ENCODE measurements at regions of chr4 and their contacts with region 1.

Region 1: GRCh38 chr4:48727666-48728459 is 52.2 kb downstream of the FRYL start:
- DNase-seq: no peak
- H3K4me3 ChIP-seq: no peak overlapping the region
- H3K27ac ChIP-seq: peak overlapping the region; percentile 89
- H3K4me1 ChIP-seq: peaks cover 31% of the 10 kb centered on the region
- H3K27me3 ChIP-seq: no peaks in the 10 kb centered on the region
- CTCF ChIP-seq: no peak

Region 2: DNA sequence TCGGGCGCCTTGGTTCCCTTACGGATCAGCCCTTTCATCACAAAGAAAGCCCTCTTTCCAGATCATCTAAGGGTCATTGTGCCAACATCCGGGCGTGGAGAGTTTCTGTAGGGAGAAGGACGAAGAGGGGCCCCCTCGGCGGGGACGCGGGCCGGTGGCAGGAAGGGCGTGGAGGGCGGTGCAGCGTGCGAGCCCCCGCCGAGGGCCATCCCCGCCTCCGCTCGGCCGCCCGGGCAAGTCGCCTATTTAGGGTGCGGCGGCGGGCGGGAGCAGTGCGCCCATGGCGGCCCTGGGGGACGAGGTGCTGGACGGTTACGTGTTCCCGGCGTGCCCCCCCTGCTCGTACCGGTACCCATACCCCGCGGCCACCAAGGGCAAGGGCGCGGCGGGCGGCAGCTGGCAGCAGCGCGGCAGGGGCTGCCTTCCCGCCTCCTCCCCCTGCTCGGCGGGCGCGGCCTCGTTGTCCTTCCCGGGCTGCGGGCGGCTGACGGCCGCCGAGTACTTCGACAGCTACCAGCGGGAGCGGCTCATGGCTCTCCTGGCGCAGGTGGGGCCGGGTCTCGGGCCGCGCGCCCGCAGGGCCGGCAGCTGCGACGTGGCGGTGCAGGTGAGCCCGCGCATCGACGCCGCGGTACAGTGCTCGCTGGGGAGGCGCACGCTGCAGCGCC is 237.7 kb before region 1 on chr4 and contains the start of gene ZAR1:
- CTCF ChIA-PET with region 1: no interaction called
- POLR2A ChIA-PET with region 1: no interaction called
- intact Hi-C with region 1: no loop called
- DNase-seq: no peak
- H3K4me3 ChIP-seq: no peak within 1 kb of the TSS
- H3K27ac ChIP-seq: no peak within 1 kb of the TSS
- H3K4me1 ChIP-seq: no peaks in the 10 kb centered on the region
- H3K27me3 ChIP-seq: no peaks in the 10 kb centered on the region
- CTCF ChIP-seq: no peak
- total RNA-seq, gene ZAR1: not detected in 2 replicates

Region 3: DNA sequence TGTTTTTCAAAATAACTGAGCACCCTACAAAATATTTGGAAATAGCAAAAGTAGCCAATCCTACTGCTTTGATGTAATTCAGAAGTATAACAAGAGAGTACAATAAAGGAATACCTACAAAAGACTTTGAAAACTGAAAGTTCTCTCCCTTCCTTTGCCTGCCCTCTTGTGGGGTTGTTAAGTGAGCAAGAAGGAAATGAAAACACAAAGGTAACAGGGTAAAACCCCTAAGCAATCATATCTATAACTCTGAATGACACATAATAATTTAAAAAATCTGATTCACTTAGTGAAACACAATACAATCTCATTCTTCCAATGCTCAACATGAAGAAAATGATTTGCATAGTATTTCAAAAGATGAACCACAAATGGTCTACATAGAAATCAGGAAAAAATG is 46.0 kb before region 1 on chr4:
- CTCF ChIA-PET with region 1: no interaction called
- POLR2A ChIA-PET with region 1: no interaction called
- intact Hi-C with region 1: loop called (anchors 1 kb)
- DNase-seq: peak in 1 of 2 experiments; percentile 47
- H3K4me3 ChIP-seq: no peak overlapping the region
- H3K27ac ChIP-seq: no peak overlapping the region
- H3K4me1 ChIP-seq: no peaks in the 10 kb centered on the region
- H3K27me3 ChIP-seq: no peaks in the 10 kb centered on the region
- CTCF ChIP-seq: peak; percentile 53; the same call in 1 of the 2 replicates